T-cell (primary cell): ENCODE measurements at regions of chr6 and their contacts with region 1.

Region 1: DNA sequence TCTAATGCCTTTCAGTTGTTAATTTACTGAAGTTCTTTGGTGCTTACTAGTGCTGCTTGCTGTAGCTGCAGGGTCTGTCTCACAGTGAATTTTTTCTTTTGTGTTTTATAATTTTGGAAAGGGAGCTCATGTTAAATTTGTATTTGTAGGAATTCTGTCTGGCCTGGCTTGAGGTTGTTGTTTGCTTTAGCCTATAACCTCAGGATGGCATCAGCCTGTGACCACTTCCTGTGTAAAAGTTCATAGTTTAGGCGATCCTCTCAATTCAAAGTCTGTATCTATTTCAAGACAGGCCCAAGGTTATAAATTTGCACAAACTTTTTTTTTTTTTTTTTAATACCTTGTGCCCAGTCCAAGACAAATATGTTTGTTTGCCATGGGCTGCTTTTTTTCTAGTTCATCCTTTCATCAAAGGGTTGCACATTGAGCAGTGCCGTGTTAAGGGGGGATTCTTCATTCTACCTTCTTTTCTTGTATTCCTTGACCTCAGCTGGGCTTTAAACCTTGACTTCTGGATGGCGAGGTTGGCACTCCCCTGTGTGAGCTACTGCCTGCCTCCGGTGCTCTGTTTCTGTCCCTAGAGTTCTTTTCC is 7.3 kb downstream of the RIPK1 start:
- DNase-seq: no peak
- ATAC-seq: peak in 3 of 4 experiments; percentile 31 to 67 (median 43)
- H3K4me3 ChIP-seq: no peak overlapping the region
- H3K4me3 Mint-ChIP-seq: peak overlapping the region; percentile 38 to 70 (median 59)
- H3K27ac ChIP-seq: peak overlapping the region; percentile 48
- H3K27ac Mint-ChIP-seq: peak overlapping the region; percentile 91 to 93
- H3K4me1 ChIP-seq: peaks cover 10 to 28% of the 10 kb centered on the region in 2 experiments
- H3K4me1 Mint-ChIP-seq: peaks cover 52 to 66% (median 65%) of the 10 kb centered on the region in 3 donors
- H3K27me3 ChIP-seq: no peaks in the 10 kb centered on the region
- H3K27me3 Mint-ChIP-seq: no peaks in the 10 kb centered on the region

Region 2: DNA sequence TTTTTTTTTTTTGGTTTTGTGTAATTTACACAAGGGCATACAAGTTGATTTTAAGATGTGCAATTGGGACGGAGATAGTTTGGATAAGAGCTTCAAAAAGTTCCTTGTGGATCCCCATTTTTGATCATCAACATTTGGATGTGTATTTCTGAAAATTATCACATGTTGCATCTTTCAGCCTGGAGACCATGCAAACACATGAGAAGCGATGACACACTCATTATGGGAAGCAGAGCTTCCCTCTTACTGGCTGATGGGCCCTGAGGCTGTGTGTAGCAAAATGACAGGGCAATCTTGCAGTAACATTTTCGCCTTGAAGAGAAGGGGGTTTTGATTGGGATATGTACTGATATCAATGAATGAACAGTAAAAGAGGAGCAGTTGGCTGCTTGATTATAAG is 29.3 kb before region 1 on chr6:
- CTCF ChIA-PET with region 1: no interaction called
- POLR2A ChIA-PET with region 1: interaction called in 1 of 2 experiments, 11 read pairs
- DNase-seq: no peak
- ATAC-seq: no peak
- H3K4me3 ChIP-seq: no peak overlapping the region
- H3K4me3 Mint-ChIP-seq: no peak overlapping the region
- H3K27ac ChIP-seq: no peak overlapping the region
- H3K27ac Mint-ChIP-seq: no peak overlapping the region
- H3K4me1 ChIP-seq: no peaks in the 10 kb centered on the region
- H3K4me1 Mint-ChIP-seq: peaks cover 0 to 6% (median 1%) of the 10 kb centered on the region in 3 donors
- H3K27me3 ChIP-seq: peaks cover 0 to 12% of the 10 kb centered on the region in 2 experiments
- H3K27me3 Mint-ChIP-seq: peaks cover 0 to 6% of the 10 kb centered on the region in 2 donors

Region 3: DNA sequence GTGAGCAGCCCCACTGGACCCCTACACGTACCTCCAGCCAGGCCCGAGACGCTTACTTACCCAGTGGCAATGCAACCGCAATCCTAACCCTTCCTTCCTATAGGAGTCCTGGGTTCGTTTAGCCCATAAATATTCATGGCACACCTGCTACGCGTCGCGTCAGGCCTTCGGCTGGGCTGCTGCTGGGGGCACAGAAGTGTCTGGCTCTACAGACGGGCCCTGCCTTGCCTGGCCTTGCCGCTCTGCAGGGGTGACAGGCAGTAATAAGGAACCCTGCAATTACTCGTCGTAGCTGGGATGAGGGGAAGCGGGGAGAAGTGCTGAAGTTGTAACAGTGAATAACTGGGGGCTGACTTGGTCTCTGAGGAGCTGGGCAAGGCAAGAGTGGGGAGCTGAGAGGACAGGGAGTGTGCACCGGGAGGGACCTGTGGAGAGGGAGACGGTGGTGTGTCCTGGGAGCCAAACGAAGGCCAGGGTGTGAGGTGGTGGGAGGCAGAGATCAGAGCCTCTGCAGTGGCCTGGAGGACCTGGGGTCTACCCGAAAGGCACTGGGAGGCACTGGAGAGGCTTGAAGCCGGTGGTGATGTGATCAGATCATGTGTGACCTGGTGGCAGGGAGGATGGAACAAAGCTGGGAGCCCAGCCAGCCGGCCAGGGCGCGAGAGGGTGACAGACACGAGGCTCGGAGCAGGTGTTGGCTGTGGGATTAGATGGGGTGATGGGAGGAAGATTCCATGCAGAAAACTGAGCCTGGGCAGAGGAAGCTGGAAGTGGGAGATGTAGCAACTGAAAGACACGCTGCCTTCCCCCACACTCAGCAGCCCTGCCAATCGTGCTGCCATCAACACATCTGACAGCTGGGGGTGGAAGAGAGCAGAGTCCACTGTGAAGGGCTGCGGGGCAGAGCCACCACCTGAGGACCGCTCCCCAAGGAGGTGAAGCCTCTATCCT is 219.6 kb after region 1 on chr6:
- CTCF ChIA-PET with region 1: no interaction called
- POLR2A ChIA-PET with region 1: no interaction called
- DNase-seq: no peak
- ATAC-seq: no peak
- H3K4me3 ChIP-seq: no peak overlapping the region
- H3K4me3 Mint-ChIP-seq: no peak overlapping the region
- H3K27ac ChIP-seq: no peak overlapping the region
- H3K27ac Mint-ChIP-seq: no peak overlapping the region
- H3K4me1 ChIP-seq: no peaks in the 10 kb centered on the region
- H3K4me1 Mint-ChIP-seq: no peaks in the 10 kb centered on the region
- H3K27me3 ChIP-seq: peaks cover 0 to 31% of the 10 kb centered on the region in 2 experiments
- H3K27me3 Mint-ChIP-seq: peaks cover 0 to 3% of the 10 kb centered on the region in 2 donors